Endothelial cell of umbilical vein (primary cell): ENCODE measurements at regions of chr2 and their contacts with region 1.

Region 1: DNA sequence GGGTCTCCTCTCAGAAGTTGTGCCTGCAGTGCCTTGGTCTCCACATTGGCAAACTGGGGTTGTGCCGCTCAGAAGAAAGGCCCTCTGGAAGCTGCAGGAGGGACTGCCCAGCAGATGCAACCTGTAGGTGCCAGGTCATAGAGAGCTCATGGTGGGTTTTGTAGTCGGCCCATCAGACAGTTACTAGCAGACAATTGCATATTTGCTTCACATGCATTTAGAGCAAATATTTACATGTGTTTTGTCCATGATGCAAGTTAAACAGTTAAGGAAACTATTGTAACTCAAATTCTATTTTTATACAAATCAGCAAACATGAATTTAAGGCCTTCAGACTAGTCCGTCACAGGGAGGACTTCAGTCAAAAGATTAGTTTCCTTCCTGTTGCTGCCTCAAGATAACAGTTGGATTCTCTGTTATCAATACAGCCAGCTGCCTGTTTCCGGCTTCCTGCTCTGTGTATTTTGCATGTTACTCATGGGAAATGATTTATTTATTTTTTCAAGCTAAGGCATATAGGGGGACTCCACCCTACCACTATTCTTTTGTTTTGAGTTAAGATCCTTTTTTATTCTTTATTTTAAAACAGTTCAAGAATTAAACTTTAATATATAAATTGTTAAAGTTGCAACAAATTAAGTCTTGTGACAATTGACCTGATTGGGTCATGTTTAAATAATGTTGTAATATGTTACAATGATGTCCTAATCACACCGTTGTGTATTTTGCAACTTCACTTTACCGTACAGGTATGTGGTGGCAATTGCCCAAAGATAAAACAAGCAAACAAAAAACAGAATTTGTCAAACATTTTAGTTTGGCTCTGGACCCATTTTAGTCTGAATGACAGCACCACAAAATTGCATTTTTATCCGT is 133.5 kb downstream of the SPTBN1 start:
- DNase-seq: peak; percentile 99
- H3K4me3 ChIP-seq: peak overlapping the region in 1 of 3 experiments; percentile 46
- H3K27ac ChIP-seq: peak overlapping the region; percentile 91
- H3K4me1 ChIP-seq: peaks cover 64% of the 10 kb centered on the region
- H3K27me3 ChIP-seq: no peaks in the 10 kb centered on the region
- CTCF ChIP-seq: no peak
- POLR2A ChIP-seq: peak; percentile 95

Region 2: GRCh38 chr2:54522624-54523281 is 66.8 kb before region 1 on chr2:
- CTCF ChIA-PET with region 1: interaction called, 3 read pairs
- POLR2A ChIA-PET with region 1: no interaction called
- dilution Hi-C with region 1: no loop called
- intact Hi-C with region 1: loop called (anchors 2 kb)
- DNase-seq: peak; percentile 44
- H3K4me3 ChIP-seq: no peak overlapping the region
- H3K27ac ChIP-seq: no peak overlapping the region
- H3K4me1 ChIP-seq: peaks cover 10% of the 10 kb centered on the region
- H3K27me3 ChIP-seq: no peaks in the 10 kb centered on the region
- CTCF ChIP-seq: peak; percentile 48 to 68
- POLR2A ChIP-seq: no peak

Region 3: GRCh38 chr2:54551123-54551756 is 38.3 kb before region 1 on chr2:
- CTCF ChIA-PET with region 1: no interaction called
- POLR2A ChIA-PET with region 1: no interaction called
- dilution Hi-C with region 1: no loop called
- intact Hi-C with region 1: no loop called
- DNase-seq: no peak
- H3K4me3 ChIP-seq: no peak overlapping the region
- H3K27ac ChIP-seq: no peak overlapping the region
- H3K4me1 ChIP-seq: peaks cover 15% of the 10 kb centered on the region
- H3K27me3 ChIP-seq: no peaks in the 10 kb centered on the region
- CTCF ChIP-seq: no peak
- POLR2A ChIP-seq: no peak

Region 4: GRCh38 chr2:54570925-54571694 is 18.5 kb before region 1 on chr2:
- CTCF ChIA-PET with region 1: interaction called, 10 read pairs
- POLR2A ChIA-PET with region 1: interaction called, 6 read pairs
- dilution Hi-C with region 1: no loop called
- intact Hi-C with region 1: loop called (anchors 1 kb)
- DNase-seq: peak; percentile 84
- H3K4me3 ChIP-seq: no peak overlapping the region
- H3K27ac ChIP-seq: peak overlapping the region; percentile 100
- H3K4me1 ChIP-seq: peaks cover 66% of the 10 kb centered on the region
- H3K27me3 ChIP-seq: no peaks in the 10 kb centered on the region
- CTCF ChIP-seq: no peak
- POLR2A ChIP-seq: no peak

Region 5: DNA sequence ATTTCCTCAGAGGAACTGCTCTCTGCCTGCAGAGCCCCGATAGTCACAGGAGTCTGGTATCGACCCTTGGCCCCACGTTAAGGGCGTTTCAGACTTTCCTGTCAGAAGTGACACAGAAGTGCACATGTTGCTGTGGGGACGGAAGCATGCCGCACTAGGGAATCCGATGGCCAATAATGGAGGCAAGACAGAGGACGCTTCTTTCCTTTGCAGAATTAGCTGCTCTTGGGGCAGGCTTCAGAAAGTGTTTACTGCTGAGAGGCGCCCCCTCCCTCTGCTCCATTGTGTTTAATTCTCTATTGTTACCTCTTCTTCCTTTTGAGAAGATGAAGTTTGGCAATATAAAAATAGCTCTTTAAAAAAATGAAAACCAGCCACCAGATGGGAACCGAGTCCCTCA is 15.3 kb after region 1 on chr2:
- CTCF ChIA-PET with region 1: interaction called, 12 read pairs
- POLR2A ChIA-PET with region 1: no interaction called
- dilution Hi-C with region 1: no loop called
- intact Hi-C with region 1: loop called (anchors 1 kb)
- DNase-seq: peak; percentile 85
- H3K4me3 ChIP-seq: no peak overlapping the region
- H3K27ac ChIP-seq: peak overlapping the region; percentile 72
- H3K4me1 ChIP-seq: peaks cover 53% of the 10 kb centered on the region
- H3K27me3 ChIP-seq: no peaks in the 10 kb centered on the region
- CTCF ChIP-seq: no peak
- POLR2A ChIP-seq: peak; percentile 43

Region 6: DNA sequence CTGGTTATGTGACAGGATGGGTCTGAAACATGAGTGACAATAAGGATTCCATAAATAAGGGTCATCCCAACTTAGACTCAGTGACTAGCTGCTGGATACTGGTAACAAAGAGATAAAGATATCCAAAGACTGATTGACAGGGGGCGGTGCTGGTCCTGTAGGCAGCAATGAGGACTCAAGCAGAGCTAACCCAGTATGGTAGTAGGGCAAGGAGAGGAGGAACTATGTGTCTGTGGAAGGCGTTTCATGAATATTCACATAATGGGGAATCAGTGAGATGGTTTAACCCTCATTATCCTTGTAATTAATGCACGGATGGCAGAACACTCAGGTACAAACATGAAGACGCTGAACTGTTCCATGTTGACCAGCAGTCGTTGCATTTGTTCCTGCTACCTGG is 31.4 kb after region 1 on chr2:
- CTCF ChIA-PET with region 1: no interaction called
- POLR2A ChIA-PET with region 1: no interaction called
- dilution Hi-C with region 1: no loop called
- intact Hi-C with region 1: no loop called
- DNase-seq: no peak
- H3K4me3 ChIP-seq: no peak overlapping the region
- H3K27ac ChIP-seq: no peak overlapping the region
- H3K4me1 ChIP-seq: peaks cover 11% of the 10 kb centered on the region
- H3K27me3 ChIP-seq: no peaks in the 10 kb centered on the region
- CTCF ChIP-seq: no peak
- POLR2A ChIP-seq: no peak